IMR-90 (cell line): ENCODE measurements at regions of chr18 and their contacts with region 1.

Region 1: DNA sequence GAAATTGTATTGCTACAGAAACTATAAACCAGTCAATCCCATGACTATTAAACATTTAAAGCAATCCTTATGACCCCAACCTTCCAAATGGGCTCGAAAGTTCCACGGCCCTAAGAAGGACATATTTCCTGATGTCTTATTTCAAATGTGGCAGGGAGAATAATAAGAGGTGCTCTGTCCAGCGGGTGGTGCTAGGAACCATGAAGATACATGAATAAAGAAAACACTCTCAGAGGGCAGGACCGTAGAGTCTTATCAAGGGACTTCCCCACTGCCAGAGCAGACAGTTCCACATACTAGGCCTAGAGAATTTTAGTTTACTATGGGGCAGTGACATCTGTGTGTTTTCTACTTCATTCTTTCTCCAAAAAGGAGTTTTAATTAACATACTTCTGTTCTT is 187.1 kb upstream of the PIK3C3 start:
- DNase-seq: peak; percentile 48
- ATAC-seq: peak; percentile 35; the same call in 1 of the 2 replicates
- H3K4me3 ChIP-seq: no peak overlapping the region
- H3K27ac ChIP-seq: no peak overlapping the region
- H3K4me1 ChIP-seq: no peaks in the 10 kb centered on the region
- H3K27me3 ChIP-seq: no peaks in the 10 kb centered on the region; the same call in 1 of the 2 replicates
- CTCF ChIP-seq: peak; percentile 37
- POLR2A ChIP-seq: no peak
- RAD21 ChIP-seq: peak; percentile 33

Region 2: DNA sequence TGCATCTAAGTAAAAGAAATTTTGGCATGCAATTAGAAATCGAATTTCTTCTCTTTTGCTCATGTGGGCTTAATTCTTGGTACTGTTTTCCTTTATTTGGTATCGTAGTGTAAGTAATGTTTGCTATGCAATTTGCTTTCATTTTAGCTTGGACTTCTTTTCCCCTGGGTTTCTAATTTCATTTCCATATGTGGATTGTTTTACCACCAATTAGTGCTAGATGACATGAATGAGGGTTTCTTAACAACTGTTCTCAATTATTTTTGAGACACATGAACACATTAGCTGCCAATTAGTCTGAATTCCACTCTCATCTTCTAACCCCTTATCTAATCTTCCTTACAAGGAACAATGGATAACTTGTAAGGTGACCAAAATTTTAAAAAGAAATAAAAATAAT is 860.1 kb before region 1 on chr18:
- CTCF ChIA-PET with region 1: no interaction called
- POLR2A ChIA-PET with region 1: no interaction called
- dilution Hi-C with region 1: no loop called
- in situ Hi-C with region 1: no loop called
- intact Hi-C with region 1: no loop called
- DNase-seq: no peak
- ATAC-seq: no peak
- H3K4me3 ChIP-seq: no peak overlapping the region
- H3K27ac ChIP-seq: no peak overlapping the region
- H3K4me1 ChIP-seq: peaks cover 4% of the 10 kb centered on the region
- H3K27me3 ChIP-seq: no peaks in the 10 kb centered on the region
- CTCF ChIP-seq: no peak
- POLR2A ChIP-seq: no peak
- RAD21 ChIP-seq: no peak

Region 3: GRCh38 chr18:41457765-41458326 is 310.1 kb before region 1 on chr18:
- CTCF ChIA-PET with region 1: no interaction called
- POLR2A ChIA-PET with region 1: no interaction called
- dilution Hi-C with region 1: no loop called
- in situ Hi-C with region 1: no loop called
- intact Hi-C with region 1: no loop called
- DNase-seq: no peak
- ATAC-seq: no peak
- H3K4me3 ChIP-seq: no peak overlapping the region
- H3K27ac ChIP-seq: no peak overlapping the region
- H3K4me1 ChIP-seq: no peaks in the 10 kb centered on the region
- H3K27me3 ChIP-seq: no peaks in the 10 kb centered on the region
- CTCF ChIP-seq: no peak
- POLR2A ChIP-seq: no peak
- RAD21 ChIP-seq: no peak

Region 4: GRCh38 chr18:41703744-41704530 is 64.0 kb before region 1 on chr18:
- CTCF ChIA-PET with region 1: no interaction called
- POLR2A ChIA-PET with region 1: no interaction called
- dilution Hi-C with region 1: no loop called
- in situ Hi-C with region 1: loop called (anchors 10 kb)
- intact Hi-C with region 1: no loop called
- DNase-seq: peak; percentile 3
- ATAC-seq: no peak
- H3K4me3 ChIP-seq: no peak overlapping the region
- H3K27ac ChIP-seq: no peak overlapping the region
- H3K4me1 ChIP-seq: no peaks in the 10 kb centered on the region
- H3K27me3 ChIP-seq: no peaks in the 10 kb centered on the region
- CTCF ChIP-seq: no peak
- POLR2A ChIP-seq: no peak
- RAD21 ChIP-seq: no peak

Region 5: DNA sequence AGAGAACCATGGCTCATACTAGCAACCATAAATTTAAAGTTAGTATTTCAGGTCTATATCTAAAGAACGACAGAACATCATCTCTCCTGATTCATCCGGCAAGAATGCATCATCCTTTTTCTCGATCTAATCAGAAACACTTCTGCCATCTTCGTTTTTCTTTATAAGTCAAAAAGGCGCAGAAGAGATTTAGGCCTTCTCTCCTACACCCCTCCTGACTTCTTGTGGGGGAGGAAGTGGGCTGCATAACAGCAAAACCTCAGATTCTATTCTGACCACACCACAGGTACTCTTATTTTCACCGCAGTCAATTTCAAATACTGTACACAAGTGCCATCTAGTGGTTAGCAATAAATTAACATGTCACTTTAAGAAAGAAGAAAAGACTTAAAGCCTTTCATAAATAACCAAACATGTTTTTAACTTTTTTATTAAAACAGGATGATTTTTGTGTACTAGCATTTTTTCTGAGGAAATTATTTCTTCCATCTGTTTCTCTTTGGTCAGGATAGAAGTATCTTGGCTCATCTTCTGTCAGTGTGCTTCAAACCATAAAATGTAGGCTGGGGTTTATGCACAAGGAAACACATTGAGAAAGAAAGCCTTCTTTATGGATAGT is 138.7 kb after region 1 on chr18:
- CTCF ChIA-PET with region 1: no interaction called
- POLR2A ChIA-PET with region 1: no interaction called
- dilution Hi-C with region 1: no loop called
- in situ Hi-C with region 1: loop called (anchors 5 kb)
- intact Hi-C with region 1: no loop called
- DNase-seq: peak; percentile 69
- ATAC-seq: peak; percentile 75
- H3K4me3 ChIP-seq: peak overlapping the region; percentile 30; the same call in 1 of the 2 replicates
- H3K27ac ChIP-seq: no peak overlapping the region
- H3K4me1 ChIP-seq: no peaks in the 10 kb centered on the region
- H3K27me3 ChIP-seq: no peaks in the 10 kb centered on the region
- CTCF ChIP-seq: peak; percentile 63
- POLR2A ChIP-seq: no peak
- RAD21 ChIP-seq: peak; percentile 78

Region 6: GRCh38 chr18:42107691-42108450 is 339.9 kb after region 1 on chr18:
- CTCF ChIA-PET with region 1: no interaction called
- POLR2A ChIA-PET with region 1: no interaction called
- dilution Hi-C with region 1: no loop called
- in situ Hi-C with region 1: no loop called
- intact Hi-C with region 1: no loop called
- DNase-seq: no peak
- ATAC-seq: no peak
- H3K4me3 ChIP-seq: no peak overlapping the region
- H3K27ac ChIP-seq: no peak overlapping the region
- H3K4me1 ChIP-seq: no peaks in the 10 kb centered on the region
- H3K27me3 ChIP-seq: peaks cover 4% of the 10 kb centered on the region; the same call in 1 of the 2 replicates
- CTCF ChIP-seq: no peak
- POLR2A ChIP-seq: no peak
- RAD21 ChIP-seq: no peak